A673 (cell line): ENCODE measurements at regions of chr1 and their contacts with region 1.

Region 1: GRCh38 chr1:41387667-41388091 is 26.4 kb downstream of the FOXO6 start:
- DNase-seq: no peak
- H3K4me3 ChIP-seq: no peak overlapping the region
- H3K27ac ChIP-seq: no peak overlapping the region
- H3K4me1 ChIP-seq: peaks cover 30% of the 10 kb centered on the region
- H3K27me3 ChIP-seq: no peaks in the 10 kb centered on the region
- CTCF ChIP-seq: no peak

Region 2: GRCh38 chr1:41053316-41053715 is 334.4 kb before region 1 on chr1:
- CTCF ChIA-PET with region 1: no interaction called
- POLR2A ChIA-PET with region 1: interaction called, 19 read pairs
- intact Hi-C with region 1: no loop called
- DNase-seq: no peak
- H3K4me3 ChIP-seq: no peak overlapping the region
- H3K27ac ChIP-seq: no peak overlapping the region
- H3K4me1 ChIP-seq: no peaks in the 10 kb centered on the region
- H3K27me3 ChIP-seq: no peaks in the 10 kb centered on the region
- CTCF ChIP-seq: no peak